Caco-2 (cell line): ENCODE measurements at regions of chr1 and their contacts with region 1.

Region 1: GRCh38 chr1:101309334-101310311 is 72.8 kb downstream of the S1PR1 start:
- DNase-seq: peak; percentile 35 to 37
- H3K4me3 ChIP-seq: peak overlapping the region; percentile 8; the same call in 1 of the 2 replicates
- H3K4me3 Mint-ChIP-seq: peak overlapping the region; percentile 70
- H3K27ac Mint-ChIP-seq: no peak overlapping the region
- H3K4me1 ChIP-seq: no peaks in the 10 kb centered on the region
- H3K4me1 Mint-ChIP-seq: no peaks in the 10 kb centered on the region
- H3K27me3 ChIP-seq: no peaks in the 10 kb centered on the region; the same call in 1 of the 2 replicates
- H3K27me3 Mint-ChIP-seq: peaks cover 19% of the 10 kb centered on the region
- CTCF ChIP-seq: peak; percentile 65 to 66

Region 2: GRCh38 chr1:100778748-100779147 is 530.9 kb before region 1 on chr1:
- CTCF ChIA-PET with region 1: no interaction called
- POLR2A ChIA-PET with region 1: no interaction called
- intact Hi-C with region 1: no loop called
- DNase-seq: no peak
- H3K4me3 ChIP-seq: no peak overlapping the region
- H3K4me3 Mint-ChIP-seq: no peak overlapping the region
- H3K27ac Mint-ChIP-seq: no peak overlapping the region
- H3K4me1 ChIP-seq: no peaks in the 10 kb centered on the region
- H3K4me1 Mint-ChIP-seq: no peaks in the 10 kb centered on the region
- H3K27me3 ChIP-seq: no peaks in the 10 kb centered on the region
- H3K27me3 Mint-ChIP-seq: peaks cover 6% of the 10 kb centered on the region
- CTCF ChIP-seq: no peak

Region 3: DNA sequence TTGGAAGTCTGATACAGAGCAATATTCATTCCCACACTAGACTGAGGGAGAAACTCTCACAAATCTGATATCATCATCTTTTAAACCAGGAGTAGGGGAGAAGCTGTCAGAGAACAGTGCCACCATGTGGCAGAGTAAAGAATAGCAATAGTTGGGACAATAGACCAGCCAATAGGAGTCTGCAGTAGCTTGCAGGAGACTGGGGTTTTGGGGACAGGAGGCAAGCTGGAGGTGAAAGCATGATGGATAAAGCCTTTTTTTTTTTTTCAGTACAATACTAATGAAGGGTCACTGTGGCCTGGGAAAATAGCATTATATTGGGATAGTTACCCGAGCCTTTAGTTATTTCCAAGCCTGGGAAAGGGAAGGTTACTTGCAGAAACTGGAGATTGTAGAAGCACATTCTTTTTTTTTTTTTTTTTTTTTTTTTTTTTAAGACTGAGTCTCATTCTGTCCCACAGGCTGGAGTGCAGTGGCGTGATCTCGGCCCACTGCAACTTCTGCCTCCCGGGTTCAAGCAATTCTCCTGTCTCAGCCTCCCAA is 47.9 kb after region 1 on chr1:
- CTCF ChIA-PET with region 1: interaction called, 38 read pairs
- POLR2A ChIA-PET with region 1: no interaction called
- intact Hi-C with region 1: loop called (anchors 1 kb)
- DNase-seq: peak; percentile 54 to 69
- H3K4me3 ChIP-seq: no peak overlapping the region
- H3K4me3 Mint-ChIP-seq: no peak overlapping the region
- H3K27ac Mint-ChIP-seq: no peak overlapping the region
- H3K4me1 ChIP-seq: no peaks in the 10 kb centered on the region
- H3K4me1 Mint-ChIP-seq: no peaks in the 10 kb centered on the region
- H3K27me3 ChIP-seq: no peaks in the 10 kb centered on the region
- H3K27me3 Mint-ChIP-seq: peaks cover 4% of the 10 kb centered on the region
- CTCF ChIP-seq: peak; percentile 50 to 53

Region 4: GRCh38 chr1:101438359-101438758 is 128.7 kb after region 1 on chr1:
- CTCF ChIA-PET with region 1: no interaction called
- POLR2A ChIA-PET with region 1: no interaction called
- intact Hi-C with region 1: loop called (anchors 1 kb)
- DNase-seq: peak in 1 of 2 experiments; percentile 1
- H3K4me3 ChIP-seq: no peak overlapping the region
- H3K4me3 Mint-ChIP-seq: no peak overlapping the region
- H3K27ac Mint-ChIP-seq: no peak overlapping the region
- H3K4me1 ChIP-seq: no peaks in the 10 kb centered on the region
- H3K4me1 Mint-ChIP-seq: no peaks in the 10 kb centered on the region
- H3K27me3 ChIP-seq: no peaks in the 10 kb centered on the region
- H3K27me3 Mint-ChIP-seq: peaks cover 6% of the 10 kb centered on the region
- CTCF ChIP-seq: no peak